ENCODE measurements at regions of chr11 and their contacts with region 1.

Region 1: GRCh38 chr11:8033305-8034105 is 46.4 kb downstream of the EIF3F start:
- DNase-seq: peak; percentile 75
- H3K4me3 Mint-ChIP-seq: no peak overlapping the region
- H3K27ac Mint-ChIP-seq: no peak overlapping the region
- H3K4me1 Mint-ChIP-seq: peaks cover 5% of the 10 kb centered on the region
- H3K27me3 Mint-ChIP-seq: peaks cover 54% of the 10 kb centered on the region
- CTCF ChIP-seq: peak; percentile 85

Region 2: DNA sequence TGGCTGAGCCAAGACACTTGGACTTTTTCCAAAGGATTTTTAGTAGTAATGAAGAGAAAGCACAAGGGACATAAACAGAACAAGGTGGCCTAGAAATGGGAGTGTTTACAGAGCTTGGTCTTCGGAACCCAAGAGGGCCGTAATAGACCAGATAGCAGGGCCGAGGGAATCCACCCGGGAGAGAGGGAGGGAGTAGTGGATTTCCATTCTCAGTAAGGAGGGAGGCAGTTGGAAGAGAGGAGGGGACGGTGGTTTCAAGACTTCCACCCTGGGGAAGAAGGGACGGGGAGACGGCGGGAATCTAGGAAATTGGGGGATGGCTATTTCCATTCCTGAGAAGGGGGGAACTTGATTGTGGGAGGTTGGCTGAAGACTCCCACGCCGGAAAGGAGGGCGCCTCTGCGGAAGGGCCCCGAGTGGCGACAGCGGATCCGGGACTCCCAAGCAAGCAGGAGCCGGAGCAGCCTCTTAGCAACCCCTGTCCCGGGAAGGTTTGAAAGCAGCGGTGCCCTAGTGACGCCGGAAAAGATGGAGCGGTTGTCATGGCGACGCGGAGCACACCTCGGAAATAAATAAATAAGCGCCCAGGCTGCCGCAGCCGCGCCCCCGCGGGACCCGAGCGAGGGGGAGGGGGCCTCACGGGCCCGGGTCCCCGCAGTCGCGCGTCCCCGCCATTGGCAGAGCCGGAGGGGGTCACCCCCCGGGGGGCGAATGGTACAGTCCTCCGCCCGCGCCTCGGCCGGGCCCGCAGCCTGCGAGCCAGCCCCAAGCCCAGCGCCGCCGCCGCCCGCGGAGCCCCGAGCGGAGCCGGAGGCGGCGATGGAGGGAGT is 14.8 kb before region 1 on chr11:
- CTCF ChIA-PET with region 1: interaction called, 50 read pairs
- POLR2A ChIA-PET with region 1: no interaction called
- intact Hi-C with region 1: no loop called
- DNase-seq: no peak
- H3K4me3 Mint-ChIP-seq: peak overlapping the region; percentile 62
- H3K27ac Mint-ChIP-seq: no peak overlapping the region
- H3K4me1 Mint-ChIP-seq: peaks cover 12% of the 10 kb centered on the region
- H3K27me3 Mint-ChIP-seq: peaks cover 47% of the 10 kb centered on the region
- CTCF ChIP-seq: no peak

Region 3: DNA sequence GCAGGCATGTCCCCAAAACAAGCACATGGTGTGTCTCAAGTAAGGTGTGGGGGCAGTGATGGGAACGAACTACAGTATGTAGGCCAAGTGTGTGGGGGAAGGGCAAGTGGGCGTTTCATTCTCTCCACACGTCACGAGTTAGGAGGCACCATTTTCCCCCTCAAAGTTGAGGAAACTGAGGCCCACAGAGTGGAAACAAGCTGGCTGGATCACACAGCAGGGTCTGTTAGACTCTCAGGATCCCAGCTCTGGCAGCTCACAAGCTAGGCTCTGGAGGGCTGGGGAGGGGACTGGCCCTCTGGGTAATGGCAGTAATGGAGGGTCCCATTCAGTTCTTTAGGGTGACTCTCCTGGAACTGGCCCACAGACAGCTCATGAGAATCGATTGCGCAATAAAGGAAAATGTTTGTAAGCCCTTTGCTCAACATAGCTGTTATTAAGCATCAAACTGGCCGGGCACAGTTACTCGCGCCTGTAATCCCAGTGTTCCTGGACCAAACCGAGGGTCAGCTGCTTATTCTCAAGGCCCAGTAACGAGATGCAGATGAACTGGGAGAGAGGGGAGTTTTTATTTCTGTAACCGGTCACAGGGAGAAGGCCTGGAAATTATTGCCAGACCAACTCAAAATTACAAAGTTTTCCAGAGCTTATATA is 23.4 kb after region 1 on chr11:
- CTCF ChIA-PET with region 1: interaction called, 17 read pairs
- POLR2A ChIA-PET with region 1: no interaction called
- intact Hi-C with region 1: no loop called
- DNase-seq: peak; percentile 39
- H3K4me3 Mint-ChIP-seq: no peak overlapping the region
- H3K27ac Mint-ChIP-seq: no peak overlapping the region
- H3K4me1 Mint-ChIP-seq: peaks cover 8% of the 10 kb centered on the region
- H3K27me3 Mint-ChIP-seq: peaks cover under 1% of the 10 kb centered on the region
- CTCF ChIP-seq: no peak

Region 4: GRCh38 chr11:8080674-8081590 is 47.4 kb after region 1 on chr11 and contains the start of gene TUB:
- CTCF ChIA-PET with region 1: interaction called, 786 read pairs
- POLR2A ChIA-PET with region 1: interaction called, 3 read pairs
- intact Hi-C with region 1: no loop called
- DNase-seq: no peak
- H3K4me3 Mint-ChIP-seq: peak within 1 kb of the TSS; percentile 57
- H3K27ac Mint-ChIP-seq: no peak within 1 kb of the TSS
- H3K4me1 Mint-ChIP-seq: no peaks in the 10 kb centered on the region
- H3K27me3 Mint-ChIP-seq: peaks cover 7% of the 10 kb centered on the region
- CTCF ChIP-seq: no peak
- total RNA-seq, gene TUB: 1.4 and 1.8 TPM in 2 replicates

Region 5: DNA sequence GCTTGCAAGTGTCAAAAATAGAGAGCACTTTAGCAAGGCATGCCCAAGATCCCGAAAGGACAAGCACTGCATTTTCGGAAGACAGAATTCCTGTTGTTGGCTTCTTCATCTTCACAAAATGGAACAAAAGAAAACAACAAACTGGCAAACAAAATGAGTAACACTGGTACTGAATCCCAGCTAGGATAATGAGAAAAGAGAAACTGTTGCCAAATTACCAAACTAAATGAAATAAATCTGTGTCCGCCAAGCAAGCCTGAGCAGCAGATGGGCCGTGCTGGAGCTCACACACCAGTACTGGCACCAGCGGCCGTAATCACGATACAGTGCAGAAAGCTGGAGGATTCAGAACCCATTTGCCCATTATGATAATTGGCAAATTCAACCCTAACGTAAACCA is 78.1 kb after region 1 on chr11:
- CTCF ChIA-PET with region 1: interaction called, 23 read pairs
- POLR2A ChIA-PET with region 1: no interaction called
- intact Hi-C with region 1: no loop called
- DNase-seq: no peak
- H3K4me3 Mint-ChIP-seq: no peak overlapping the region
- H3K27ac Mint-ChIP-seq: no peak overlapping the region
- H3K4me1 Mint-ChIP-seq: no peaks in the 10 kb centered on the region
- H3K27me3 Mint-ChIP-seq: no peaks in the 10 kb centered on the region
- CTCF ChIP-seq: no peak

Region 6: DNA sequence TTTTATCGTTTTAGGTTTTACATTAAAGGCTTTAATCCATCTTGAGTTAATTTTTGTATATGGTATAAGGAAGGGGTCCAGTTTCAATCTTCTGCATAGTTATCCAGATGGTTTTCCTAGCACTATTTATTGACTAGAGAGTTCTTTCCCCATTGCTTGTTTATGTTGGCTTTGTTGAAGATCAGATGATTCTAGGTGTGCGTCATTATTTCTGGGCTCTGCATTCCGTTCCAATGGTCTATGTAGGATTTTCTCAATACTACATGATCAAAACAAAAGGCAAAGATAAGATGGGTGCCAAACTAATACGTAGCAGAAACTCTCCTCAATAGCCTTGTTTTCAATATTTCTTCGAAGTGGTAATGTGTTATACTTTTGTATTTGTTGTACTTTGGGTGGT is 149.6 kb after region 1 on chr11:
- CTCF ChIA-PET with region 1: no interaction called
- POLR2A ChIA-PET with region 1: no interaction called
- intact Hi-C with region 1: no loop called
- DNase-seq: no peak
- H3K4me3 Mint-ChIP-seq: no peak overlapping the region
- H3K27ac Mint-ChIP-seq: no peak overlapping the region
- H3K4me1 Mint-ChIP-seq: no peaks in the 10 kb centered on the region
- H3K27me3 Mint-ChIP-seq: peaks cover 55% of the 10 kb centered on the region
- CTCF ChIP-seq: no peak